PC-9 (cell line): ENCODE measurements at regions of chr7 and their contacts with region 1.

Region 1: DNA sequence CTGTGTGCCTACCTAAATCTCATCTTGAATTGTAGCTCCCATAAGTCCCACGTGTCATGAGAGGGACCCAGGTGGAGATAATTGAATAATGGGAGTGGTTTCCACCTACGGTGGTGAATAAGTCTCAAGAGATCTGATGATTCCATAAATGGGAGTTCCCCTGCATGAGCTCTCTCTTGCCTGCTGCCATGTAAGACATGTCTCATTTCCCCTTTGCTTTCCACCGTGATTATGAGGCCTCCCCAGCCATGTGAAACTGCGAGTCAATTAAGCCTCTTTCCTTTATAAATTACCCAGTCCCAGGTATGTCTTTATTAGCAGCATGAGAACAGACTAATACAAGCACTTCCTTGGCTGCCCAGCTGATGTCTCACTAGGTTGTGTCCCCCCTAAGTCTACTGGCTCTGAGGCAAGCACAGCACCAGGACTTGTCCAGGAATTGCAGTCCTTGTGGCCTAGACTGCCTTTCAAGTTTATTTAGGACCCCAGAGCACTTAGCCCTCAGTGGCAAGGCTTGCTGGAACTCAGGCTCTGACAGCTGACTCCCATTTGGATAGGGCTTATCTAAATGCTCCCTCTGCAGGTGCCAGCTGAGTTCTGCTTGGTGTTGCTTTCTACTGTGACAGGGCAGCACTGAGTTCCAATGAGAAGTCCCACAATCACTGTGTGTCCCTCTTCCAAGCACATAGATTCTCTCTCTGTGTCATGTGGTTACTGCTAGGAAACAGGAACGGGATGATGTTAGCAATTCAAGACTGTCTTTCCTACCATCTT is 59.0 kb upstream of the TAS2R16 start:
- DNase-seq: no peak
- H3K4me3 ChIP-seq: no peak overlapping the region
- H3K27ac ChIP-seq: no peak overlapping the region
- H3K4me1 ChIP-seq: no peaks in the 10 kb centered on the region
- H3K27me3 ChIP-seq: no peaks in the 10 kb centered on the region
- CTCF ChIP-seq: peak; percentile 37; the same call in 1 of the 2 replicates

Region 2: DNA sequence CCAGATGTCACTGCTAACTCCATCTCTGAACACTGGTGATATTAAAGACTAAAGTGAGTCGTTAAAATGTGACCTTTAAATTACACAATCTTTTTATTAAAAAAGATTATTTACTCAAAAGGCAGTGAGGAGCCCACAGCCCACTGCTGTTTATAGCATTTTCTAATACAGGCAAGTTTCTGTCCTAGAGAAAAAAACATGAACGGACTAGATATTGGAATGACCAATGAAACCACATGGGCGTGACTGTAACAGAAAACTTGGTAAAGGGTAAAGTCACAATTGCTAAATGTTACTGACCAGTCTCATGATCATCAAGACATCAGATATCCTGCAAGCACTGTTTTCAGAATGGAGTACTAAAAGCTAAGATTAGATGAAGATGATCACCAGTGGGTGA is 828.7 kb before region 1 on chr7:
- CTCF ChIA-PET with region 1: no interaction called
- POLR2A ChIA-PET with region 1: no interaction called
- intact Hi-C with region 1: no loop called
- DNase-seq: no peak
- H3K4me3 ChIP-seq: no peak overlapping the region
- H3K27ac ChIP-seq: no peak overlapping the region
- H3K4me1 ChIP-seq: no peaks in the 10 kb centered on the region
- H3K27me3 ChIP-seq: no peaks in the 10 kb centered on the region
- CTCF ChIP-seq: no peak

Region 3: DNA sequence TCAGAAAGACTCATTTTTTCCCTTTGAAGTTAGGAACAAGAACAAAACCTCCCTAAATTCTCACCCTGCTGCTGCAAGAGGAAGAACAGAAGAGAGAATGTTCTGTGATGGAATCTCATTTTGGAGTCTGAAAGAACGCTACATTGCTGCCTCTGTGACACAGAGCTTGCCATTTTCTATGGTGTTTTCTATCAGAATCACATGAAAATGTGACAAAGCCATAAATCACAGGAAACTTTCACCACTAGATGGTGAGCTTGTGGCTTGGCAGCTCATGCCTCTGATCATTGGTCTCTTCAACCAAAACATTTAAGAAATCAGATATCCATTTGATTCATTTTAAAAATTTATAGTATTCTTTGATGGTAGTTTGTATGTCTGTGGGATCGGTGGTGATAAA is 251.2 kb before region 1 on chr7:
- CTCF ChIA-PET with region 1: no interaction called
- POLR2A ChIA-PET with region 1: no interaction called
- intact Hi-C with region 1: loop called (anchors 10 kb)
- DNase-seq: peak in 1 of 2 experiments; percentile 21
- H3K4me3 ChIP-seq: no peak overlapping the region
- H3K27ac ChIP-seq: no peak overlapping the region
- H3K4me1 ChIP-seq: no peaks in the 10 kb centered on the region
- H3K27me3 ChIP-seq: no peaks in the 10 kb centered on the region
- CTCF ChIP-seq: peak; percentile 62